GM12878 (cell line): ENCODE measurements at regions of chr6 and their contacts with region 1.

Region 1: DNA sequence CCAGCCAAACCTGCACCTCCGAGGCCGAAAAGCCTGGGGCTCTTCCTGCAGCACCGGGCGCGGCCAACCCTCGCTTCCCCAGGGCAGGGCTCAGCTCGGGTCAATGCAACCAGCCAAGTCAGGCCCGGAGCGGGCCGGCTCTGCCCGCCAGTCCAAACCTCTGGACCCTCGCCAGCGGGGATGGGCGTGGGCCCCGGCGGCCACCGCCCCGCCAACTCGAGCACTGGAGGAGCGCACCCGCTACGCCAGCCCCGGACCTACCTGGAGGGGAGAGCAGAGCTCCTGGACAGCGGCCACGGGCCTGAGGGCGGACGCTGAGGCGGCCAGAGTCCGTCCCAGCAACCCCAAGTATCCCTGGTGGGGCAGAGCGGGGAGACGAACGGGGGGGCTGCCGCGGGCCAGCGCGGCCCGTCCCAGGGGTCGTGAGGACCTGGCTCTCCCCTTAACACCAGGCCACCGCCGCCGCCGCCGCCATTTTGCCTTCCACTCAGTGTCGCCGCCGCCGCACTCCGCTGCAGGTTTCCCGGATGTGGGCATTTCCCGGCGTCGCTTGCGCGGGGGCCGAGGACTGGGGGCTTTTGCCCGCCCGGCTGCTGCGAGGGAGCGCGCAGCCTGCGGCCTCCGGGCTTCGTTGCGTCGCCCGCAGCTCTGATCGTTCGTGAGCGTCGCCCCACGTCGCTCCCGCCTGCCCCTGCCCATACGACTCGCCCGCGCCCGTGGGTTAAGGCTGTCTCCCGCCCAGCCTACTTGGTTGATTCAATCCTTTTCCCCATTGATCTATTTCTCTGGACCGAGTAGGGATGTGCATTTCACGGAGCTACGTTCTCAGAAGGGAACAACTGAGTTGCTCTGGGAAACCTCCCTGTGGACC is at the start of gene LATS1:
- DNase-seq: no peak
- ATAC-seq: peak; percentile 95
- H3K4me3 ChIP-seq: peak within 1 kb of the TSS; percentile 95
- H3K27ac ChIP-seq: peak within 1 kb of the TSS; percentile 86
- H3K4me1 ChIP-seq: no peaks in the 10 kb centered on the region
- H3K27me3 ChIP-seq: no peaks in the 10 kb centered on the region
- CTCF ChIP-seq: no peak
- EP300 ChIP-seq: no peak
- POLR2A ChIP-seq: peak; percentile 98
- RAD21 ChIP-seq: no peak
- polyA plus RNA-seq, gene LATS1: 2.1 to 2.4 TPM

Region 2: GRCh38 chr6:149614337-149614736 is 103.5 kb before region 1 on chr6:
- CTCF ChIA-PET with region 1: no interaction called
- POLR2A ChIA-PET with region 1: no interaction called
- RAD21 ChIA-PET with region 1: no interaction called
- SMC1A ChIA-PET with region 1: no interaction called
- in situ Hi-C with region 1: no loop called
- intact Hi-C with region 1: no loop called
- DNase-seq: no peak
- ATAC-seq: no peak
- H3K4me3 ChIP-seq: no peak overlapping the region
- H3K27ac ChIP-seq: no peak overlapping the region
- H3K4me1 ChIP-seq: no peaks in the 10 kb centered on the region
- H3K27me3 ChIP-seq: no peaks in the 10 kb centered on the region
- CTCF ChIP-seq: no peak
- EP300 ChIP-seq: no peak
- POLR2A ChIP-seq: no peak
- RAD21 ChIP-seq: no peak

Region 3: DNA sequence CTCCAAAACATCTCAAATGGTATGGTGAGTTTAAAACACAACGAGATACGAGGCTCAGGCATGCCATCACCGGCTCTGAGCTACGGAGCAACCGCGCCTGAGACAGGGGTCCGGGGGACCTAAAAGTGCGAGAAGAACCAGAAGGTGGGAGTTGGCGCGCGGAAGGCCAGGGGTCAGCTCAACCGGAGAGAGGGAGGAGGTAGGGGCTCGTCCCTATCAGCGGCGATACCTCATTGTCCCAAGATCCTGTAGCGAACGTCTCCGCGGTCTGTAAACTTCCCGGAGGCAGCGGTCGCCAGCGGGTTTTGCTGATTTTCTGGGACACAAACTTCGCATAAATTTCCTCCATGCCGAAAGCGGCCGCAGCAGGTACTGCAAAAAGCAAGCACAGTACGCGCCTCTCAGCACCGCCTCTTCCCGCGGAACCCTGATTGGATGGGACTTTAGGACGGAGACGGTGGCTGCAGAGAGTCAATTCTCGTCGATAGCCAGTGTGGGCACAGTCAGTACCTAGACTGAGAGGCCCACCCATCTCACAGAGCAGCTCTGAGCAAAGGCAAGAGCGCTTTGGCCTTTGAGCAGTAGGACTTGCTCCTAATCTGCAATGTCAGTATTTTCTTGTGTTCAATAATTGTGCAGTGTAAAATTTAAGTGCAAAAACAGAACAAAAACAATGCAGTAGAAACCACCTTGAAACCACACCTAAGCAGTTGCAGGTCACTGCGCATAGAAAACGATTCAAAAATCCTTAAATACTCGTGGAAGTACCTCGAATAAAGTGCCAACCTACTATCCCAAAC is 28.5 kb after region 1 on chr6 and contains the start of gene NUP43:
- CTCF ChIA-PET with region 1: interaction called, 4 read pairs
- POLR2A ChIA-PET with region 1: interaction called, 11 read pairs
- RAD21 ChIA-PET with region 1: interaction called, 3 read pairs
- SMC1A ChIA-PET with region 1: interaction called, 4 read pairs
- in situ Hi-C with region 1: no loop called
- intact Hi-C with region 1: loop called (anchors 2 kb)
- DNase-seq: peak; percentile 82
- ATAC-seq: peak; percentile 74
- H3K4me3 ChIP-seq: peak within 1 kb of the TSS; percentile 90
- H3K27ac ChIP-seq: peak within 1 kb of the TSS; percentile 75
- H3K4me1 ChIP-seq: peaks cover 5% of the 10 kb centered on the region
- H3K27me3 ChIP-seq: no peaks in the 10 kb centered on the region
- CTCF ChIP-seq: peak in 2 of 3 experiments; percentile 49 to 54; a peak in 5 of 6 replicates
- EP300 ChIP-seq: no peak
- POLR2A ChIP-seq: peak; percentile 67; the same call in 1 of the 2 replicates
- RAD21 ChIP-seq: no peak
- polyA plus RNA-seq, gene NUP43: 8.9 to 10.4 TPM